ENCODE measurements at regions of chr5 and their contacts with region 1.

Region 1: DNA sequence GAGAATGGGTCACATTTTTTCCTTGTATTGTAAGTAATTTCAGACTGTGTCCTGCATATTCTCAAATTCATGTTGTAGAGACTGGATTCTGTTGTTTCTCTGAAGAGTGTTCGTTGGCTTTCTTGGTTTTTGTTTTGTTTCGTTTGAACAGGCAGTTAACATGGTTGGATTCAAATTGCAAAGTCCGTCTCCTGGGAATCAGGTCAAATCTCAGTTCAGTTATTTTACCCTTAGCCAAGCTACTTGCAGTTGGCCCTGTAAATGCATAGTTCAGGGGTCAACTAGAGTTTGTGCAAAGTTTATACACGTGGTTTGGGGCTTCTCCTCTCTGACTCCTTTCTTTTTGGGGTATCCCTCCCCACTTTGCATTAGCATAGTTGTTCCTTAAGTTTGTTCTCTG is 21.7 kb upstream of the FBXW11 start:
- DNase-seq: no peak
- ATAC-seq: no peak
- H3K4me3 ChIP-seq: no peak overlapping the region
- H3K4me3 Mint-ChIP-seq: no peak overlapping the region
- H3K27ac ChIP-seq: no peak overlapping the region
- H3K27ac Mint-ChIP-seq: no peak overlapping the region
- H3K4me1 ChIP-seq: no peaks in the 10 kb centered on the region
- H3K4me1 Mint-ChIP-seq: no peaks in the 10 kb centered on the region
- H3K27me3 ChIP-seq: no peaks in the 10 kb centered on the region
- H3K27me3 Mint-ChIP-seq: no peaks in the 10 kb centered on the region
- CTCF ChIP-seq: no peak

Region 2: DNA sequence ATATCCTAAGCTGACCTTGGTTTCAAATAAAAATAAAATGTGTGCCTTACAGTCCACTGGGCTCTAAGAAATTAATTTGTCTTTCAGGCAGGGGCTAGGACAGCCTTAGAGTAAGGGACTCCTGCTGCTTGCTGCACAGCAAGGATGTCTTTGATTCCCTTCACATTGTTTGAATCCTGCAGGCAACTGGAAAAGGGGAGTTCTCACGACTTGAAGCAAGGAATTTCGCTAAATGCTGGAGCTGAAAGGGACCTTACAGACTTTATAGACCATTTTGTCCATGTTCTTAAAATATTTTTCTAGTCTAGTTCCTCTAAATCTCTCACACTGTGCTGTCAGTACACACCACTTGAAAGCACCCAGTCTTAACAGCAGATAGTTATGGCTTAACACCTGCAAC is 57.3 kb before region 1 on chr5:
- CTCF ChIA-PET with region 1: no interaction called
- POLR2A ChIA-PET with region 1: no interaction called
- intact Hi-C with region 1: loop called in 1 of 2 experiments (anchors 2 kb)
- DNase-seq: no peak
- ATAC-seq: no peak
- H3K4me3 ChIP-seq: no peak overlapping the region
- H3K4me3 Mint-ChIP-seq: no peak overlapping the region
- H3K27ac ChIP-seq: no peak overlapping the region
- H3K27ac Mint-ChIP-seq: peak overlapping the region; percentile 16
- H3K4me1 ChIP-seq: peaks cover 4% of the 10 kb centered on the region
- H3K4me1 Mint-ChIP-seq: peaks cover 66% of the 10 kb centered on the region
- H3K27me3 ChIP-seq: no peaks in the 10 kb centered on the region
- H3K27me3 Mint-ChIP-seq: no peaks in the 10 kb centered on the region
- CTCF ChIP-seq: no peak

Region 3: GRCh38 chr5:172564188-172564587 is 536.0 kb after region 1 on chr5:
- CTCF ChIA-PET with region 1: no interaction called
- POLR2A ChIA-PET with region 1: no interaction called
- intact Hi-C with region 1: no loop called
- DNase-seq: no peak
- ATAC-seq: no peak
- H3K4me3 ChIP-seq: no peak overlapping the region
- H3K4me3 Mint-ChIP-seq: no peak overlapping the region
- H3K27ac ChIP-seq: no peak overlapping the region
- H3K27ac Mint-ChIP-seq: no peak overlapping the region
- H3K4me1 ChIP-seq: no peaks in the 10 kb centered on the region
- H3K4me1 Mint-ChIP-seq: no peaks in the 10 kb centered on the region
- H3K27me3 ChIP-seq: peaks cover 4 to 8% of the 10 kb centered on the region in 2 experiments
- H3K27me3 Mint-ChIP-seq: no peaks in the 10 kb centered on the region
- CTCF ChIP-seq: no peak

Region 4: DNA sequence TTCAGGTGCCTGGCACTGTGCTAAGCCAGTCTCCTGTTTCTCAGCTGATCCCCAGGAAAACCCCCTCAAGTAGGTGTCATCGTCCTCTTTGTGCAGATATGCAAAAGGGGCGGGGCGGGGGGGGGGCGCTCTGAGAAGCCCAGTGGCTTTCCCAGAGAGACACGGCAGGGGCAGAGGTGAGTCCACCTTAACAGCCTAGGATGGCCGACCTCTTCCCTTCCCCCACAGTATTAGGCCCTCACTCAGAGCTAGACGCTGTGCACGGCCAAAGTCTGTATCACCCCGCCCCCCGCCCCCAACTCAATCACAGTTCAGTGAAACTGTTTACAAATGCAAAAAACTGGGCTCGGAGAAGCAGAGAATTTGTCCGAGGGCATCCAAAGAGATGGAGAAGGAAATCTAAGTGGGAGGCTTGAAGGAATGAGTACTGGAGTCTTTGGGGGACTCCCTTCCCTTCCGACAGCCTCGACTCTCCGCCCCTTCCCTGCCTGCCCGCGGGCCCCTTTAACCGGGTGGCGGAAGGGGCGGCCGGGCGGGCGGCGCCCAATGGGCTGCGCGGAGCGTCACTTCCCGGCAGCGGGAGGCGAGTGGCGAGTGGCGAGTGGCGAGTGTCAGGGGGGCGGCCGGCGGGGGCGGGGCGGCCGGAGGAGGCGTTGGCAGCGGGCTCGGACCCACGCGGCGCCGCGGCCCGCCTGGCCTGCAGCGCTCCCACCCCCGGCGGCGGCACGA is 805.7 kb after region 1 on chr5 and contains the start of gene ERGIC1:
- CTCF ChIA-PET with region 1: no interaction called
- POLR2A ChIA-PET with region 1: no interaction called
- intact Hi-C with region 1: no loop called
- DNase-seq: peak; percentile 17 to 83 (median 52)
- ATAC-seq: peak; percentile 66
- H3K4me3 ChIP-seq: peak within 1 kb of the TSS; percentile 83
- H3K4me3 Mint-ChIP-seq: peak within 1 kb of the TSS; percentile 95
- H3K27ac ChIP-seq: peak within 1 kb of the TSS; percentile 41 to 78
- H3K27ac Mint-ChIP-seq: peak within 1 kb of the TSS; percentile 88
- H3K4me1 ChIP-seq: peaks cover 49% of the 10 kb centered on the region
- H3K4me1 Mint-ChIP-seq: peaks cover 45% of the 10 kb centered on the region
- H3K27me3 ChIP-seq: no peaks in the 10 kb centered on the region
- H3K27me3 Mint-ChIP-seq: no peaks in the 10 kb centered on the region
- CTCF ChIP-seq: no peak
- total RNA-seq, gene ERGIC1: 51.0 to 52.4 TPM